ENCODE measurements at regions of chr16 and their contacts with region 1.

Region 1: GRCh38 chr16:85554112-85554813 is 58.9 kb upstream of the GSE1 start:
- DNase-seq: peak; percentile 90
- ATAC-seq: peak; percentile 71
- H3K4me3 Mint-ChIP-seq: peak overlapping the region; percentile 81
- H3K27ac Mint-ChIP-seq: peak overlapping the region; percentile 88
- H3K4me1 Mint-ChIP-seq: peaks cover 32% of the 10 kb centered on the region
- H3K27me3 Mint-ChIP-seq: no peaks in the 10 kb centered on the region

Region 2: DNA sequence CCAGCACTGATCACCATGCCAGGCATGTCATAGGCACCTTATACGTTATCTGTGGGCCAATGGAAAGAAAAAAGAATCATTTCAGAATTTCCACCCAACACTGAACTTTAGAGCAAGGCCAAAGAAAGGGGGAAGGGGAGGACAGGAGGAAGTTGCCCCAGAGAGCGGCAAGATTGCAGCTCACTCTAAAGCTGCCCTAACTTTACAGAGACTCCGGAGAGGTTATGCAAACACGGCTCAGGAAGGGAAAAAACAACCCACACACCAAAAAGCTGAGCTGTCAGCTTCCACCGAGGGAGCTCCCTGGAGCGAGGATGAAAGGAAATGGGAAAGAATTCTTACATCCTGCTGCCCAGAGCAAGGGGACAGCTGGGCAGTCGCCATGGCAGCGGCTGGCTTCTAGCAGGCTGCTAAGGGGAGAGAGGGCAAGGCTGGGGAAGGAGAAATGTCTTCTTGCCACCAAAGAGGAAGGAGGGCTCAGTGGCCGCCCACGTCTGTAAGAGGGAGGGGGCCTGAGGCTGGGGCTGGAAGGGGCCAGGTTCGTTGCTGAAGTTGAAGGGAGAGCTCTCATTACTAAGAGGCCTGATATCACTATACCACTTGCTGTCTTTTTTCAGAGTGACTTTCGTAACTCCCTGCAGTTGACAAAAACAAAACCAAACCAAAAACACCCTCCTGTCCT is 954.6 kb before region 1 on chr16:
- CTCF ChIA-PET with region 1: no interaction called
- POLR2A ChIA-PET with region 1: no interaction called
- intact Hi-C with region 1: loop called in 1 of 2 experiments (anchors 1 kb)
- DNase-seq: peak; percentile 90
- ATAC-seq: peak; percentile 58
- H3K4me3 Mint-ChIP-seq: peak overlapping the region; percentile 74
- H3K27ac Mint-ChIP-seq: peak overlapping the region; percentile 97
- H3K4me1 Mint-ChIP-seq: peaks cover 94% of the 10 kb centered on the region
- H3K27me3 Mint-ChIP-seq: no peaks in the 10 kb centered on the region

Region 3: GRCh38 chr16:85055503-85056210 is 498.6 kb before region 1 on chr16:
- CTCF ChIA-PET with region 1: no interaction called
- POLR2A ChIA-PET with region 1: no interaction called
- intact Hi-C with region 1: no loop called
- DNase-seq: peak; percentile 88
- ATAC-seq: peak; percentile 92
- H3K4me3 Mint-ChIP-seq: peak overlapping the region; percentile 61
- H3K27ac Mint-ChIP-seq: peak overlapping the region; percentile 88
- H3K4me1 Mint-ChIP-seq: peaks cover 57% of the 10 kb centered on the region
- H3K27me3 Mint-ChIP-seq: no peaks in the 10 kb centered on the region

Region 4: GRCh38 chr16:85420501-85421337 is 133.5 kb before region 1 on chr16:
- CTCF ChIA-PET with region 1: interaction called, 6 read pairs
- POLR2A ChIA-PET with region 1: no interaction called
- intact Hi-C with region 1: loop called (anchors 1 to 5 kb)
- DNase-seq: peak; percentile 89
- ATAC-seq: peak; percentile 76
- H3K4me3 Mint-ChIP-seq: no peak overlapping the region
- H3K27ac Mint-ChIP-seq: no peak overlapping the region
- H3K4me1 Mint-ChIP-seq: peaks cover 7% of the 10 kb centered on the region
- H3K27me3 Mint-ChIP-seq: no peaks in the 10 kb centered on the region

Region 5: GRCh38 chr16:85601730-85602401 is 47.6 kb after region 1 on chr16:
- CTCF ChIA-PET with region 1: no interaction called
- POLR2A ChIA-PET with region 1: no interaction called
- intact Hi-C with region 1: no loop called
- DNase-seq: no peak
- ATAC-seq: no peak
- H3K4me3 Mint-ChIP-seq: no peak overlapping the region
- H3K27ac Mint-ChIP-seq: no peak overlapping the region
- H3K4me1 Mint-ChIP-seq: no peaks in the 10 kb centered on the region
- H3K27me3 Mint-ChIP-seq: no peaks in the 10 kb centered on the region

Region 6: DNA sequence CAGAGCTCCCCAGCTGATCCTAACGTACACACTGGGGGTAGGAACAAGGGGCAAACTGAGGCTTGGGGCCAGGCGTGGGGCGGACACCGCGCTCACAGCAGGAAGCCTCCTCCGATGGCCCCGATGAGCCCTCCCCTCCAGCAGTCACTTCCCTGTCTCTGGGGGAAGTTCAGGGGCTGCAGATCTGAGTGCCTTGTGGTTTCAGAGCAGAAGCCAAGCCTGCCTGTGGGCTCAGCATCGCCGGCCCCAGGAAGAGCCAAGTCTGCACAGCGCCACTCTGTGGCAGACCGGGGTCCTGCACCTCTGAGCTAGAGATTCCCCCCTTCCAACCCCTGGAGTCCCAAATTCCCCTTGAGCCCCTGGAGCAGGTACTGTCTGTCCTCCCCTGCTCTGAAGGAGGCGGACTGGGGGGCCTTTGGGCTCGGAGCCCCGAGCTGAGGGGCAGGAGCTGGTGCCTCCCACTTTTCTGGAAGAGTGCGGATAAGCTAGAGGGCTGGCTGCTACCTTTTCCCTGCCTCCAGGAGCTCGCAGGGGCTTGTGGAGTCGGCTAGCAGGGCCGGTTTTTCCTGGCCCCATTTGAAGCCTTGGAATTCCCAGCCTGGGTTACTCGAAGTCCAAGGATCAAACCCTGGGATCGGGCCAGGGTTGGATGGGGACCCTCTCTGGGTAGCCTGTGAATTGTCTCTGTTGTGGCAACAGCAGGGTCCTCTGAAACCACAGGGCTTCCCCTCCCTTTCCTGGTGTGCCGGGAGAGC is 61.8 kb after region 1 on chr16:
- CTCF ChIA-PET with region 1: interaction called, 14 read pairs
- POLR2A ChIA-PET with region 1: interaction called, 7 read pairs
- intact Hi-C with region 1: loop called in 1 of 2 experiments (anchors 1 kb)
- DNase-seq: peak; percentile 89
- ATAC-seq: peak; percentile 42
- H3K4me3 Mint-ChIP-seq: peak overlapping the region; percentile 15
- H3K27ac Mint-ChIP-seq: no peak overlapping the region
- H3K4me1 Mint-ChIP-seq: peaks cover 30% of the 10 kb centered on the region
- H3K27me3 Mint-ChIP-seq: peaks cover 10% of the 10 kb centered on the region

Region 7: DNA sequence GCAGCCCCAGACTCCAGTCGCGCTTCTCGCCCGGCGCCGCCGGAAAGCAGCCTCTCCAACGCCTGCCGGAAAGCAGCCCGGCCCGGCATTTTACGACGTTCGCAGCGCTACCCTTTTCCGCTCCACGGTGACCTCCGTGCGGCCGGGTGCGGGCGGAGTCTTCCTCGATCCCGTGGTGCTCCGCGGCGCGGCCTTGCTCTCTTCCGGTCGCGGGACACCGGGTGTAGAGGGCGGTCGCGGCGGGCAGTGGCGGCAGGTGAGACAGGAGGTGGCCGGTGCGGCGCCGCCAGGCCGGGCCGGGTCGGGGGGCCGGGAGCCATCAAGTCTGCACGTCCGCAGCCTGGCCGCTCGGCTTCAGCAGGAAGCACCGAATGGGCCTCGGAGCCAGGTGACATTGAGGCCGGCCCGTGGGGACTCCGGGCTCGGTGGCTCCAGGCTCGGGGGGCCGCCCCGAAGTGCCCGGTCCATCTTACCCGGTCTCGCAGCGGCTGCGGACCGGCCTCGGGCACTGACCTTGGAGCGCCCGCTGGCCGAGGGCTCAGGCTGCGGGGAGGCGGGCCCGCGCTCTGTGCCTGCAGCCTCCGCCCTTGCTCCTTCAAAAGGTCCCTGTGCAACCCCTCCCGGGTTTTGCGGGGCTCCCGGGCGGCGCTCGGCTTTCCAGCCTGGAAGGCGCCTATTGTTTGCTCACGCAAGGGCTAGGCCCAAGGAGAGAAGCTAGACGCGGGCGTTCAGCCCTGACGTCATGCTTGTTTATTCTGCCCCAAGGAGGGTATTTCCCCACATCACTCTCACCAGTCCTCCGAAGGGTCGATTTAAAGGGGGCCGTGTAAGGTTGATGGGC is 245.5 kb after region 1 on chr16 and contains the starts of genes COX4I1 and EMC8:
- CTCF ChIA-PET with region 1: no interaction called
- POLR2A ChIA-PET with region 1: interaction called, 3 read pairs
- intact Hi-C with region 1: loop called in 1 of 2 experiments (anchors 1 kb)
- DNase-seq: peak; percentile 97
- ATAC-seq: peak; percentile 95
- H3K4me3 Mint-ChIP-seq: peak within 1 kb of the TSS; percentile 85
- H3K27ac Mint-ChIP-seq: peak within 1 kb of the TSS; percentile 89
- H3K4me1 Mint-ChIP-seq: peaks cover 60% of the 10 kb centered on the region
- H3K27me3 Mint-ChIP-seq: no peaks in the 10 kb centered on the region
- total RNA-seq, gene COX4I1: 374 to 508 TPM
- total RNA-seq, gene EMC8: 30.4 to 32.9 TPM